CD14-positive monocyte (primary cell): ENCODE measurements at regions of chr3 and their contacts with region 1.

Region 1: DNA sequence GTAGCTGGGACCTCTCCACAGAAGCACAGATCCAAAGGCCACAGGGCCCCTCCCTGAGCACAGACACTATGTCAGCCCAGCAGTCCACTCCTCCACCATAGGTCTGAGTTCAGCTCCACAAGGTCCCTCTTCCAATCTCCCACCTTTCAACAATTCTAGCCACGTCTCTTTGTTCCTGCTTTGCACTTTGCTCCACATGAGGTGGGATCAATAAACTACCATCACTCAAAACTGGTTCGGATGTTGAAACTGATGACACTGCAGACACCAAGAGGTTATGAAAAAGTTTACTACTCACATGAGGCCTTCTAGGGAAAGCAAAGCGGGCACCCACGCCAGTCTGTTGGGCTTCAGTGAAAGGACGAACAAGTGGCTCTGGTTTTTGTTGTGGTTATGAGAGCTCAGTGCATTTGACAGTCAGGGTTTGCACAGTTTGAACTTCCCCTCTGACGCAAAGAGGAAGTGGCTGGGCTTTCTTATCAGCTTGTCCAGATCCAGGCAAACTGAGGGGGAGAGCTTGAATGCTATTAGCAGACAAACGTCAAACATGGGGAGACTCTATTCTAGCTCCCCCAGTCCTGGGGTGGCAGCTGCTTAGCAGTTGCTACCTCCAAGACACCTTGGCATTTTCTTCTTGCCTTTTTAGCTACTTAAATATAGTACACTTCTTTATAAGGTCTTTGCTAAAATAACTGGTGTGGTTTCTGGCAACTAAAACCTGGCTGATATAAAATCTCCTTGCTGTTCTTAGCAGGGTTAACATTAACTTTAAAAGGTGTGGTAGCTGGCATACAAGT is 37.8 kb downstream of the ZNF445 start:
- DNase-seq: peak; percentile 95 to 98 (median 96)
- H3K4me3 ChIP-seq: peak overlapping the region; percentile 37 to 79 (median 44)
- H3K4me3 Mint-ChIP-seq: peak overlapping the region; percentile 75 to 91
- H3K27ac ChIP-seq: peak overlapping the region; percentile 92 to 99
- H3K27ac Mint-ChIP-seq: peak overlapping the region; percentile 98 to 100 (median 98)
- H3K4me1 ChIP-seq: peaks cover 34 to 44% of the 10 kb centered on the region in 2 donors
- H3K4me1 Mint-ChIP-seq: peaks cover 50% of the 10 kb centered on the region
- H3K27me3 ChIP-seq: no peaks in the 10 kb centered on the region
- H3K27me3 Mint-ChIP-seq: no peaks in the 10 kb centered on the region
- CTCF ChIP-seq: no peak

Region 2: GRCh38 chr3:44338010-44338827 is 101.5 kb before region 1 on chr3 and contains the start of gene TCAIM:
- intact Hi-C with region 1: loop called (anchors 5 to 10 kb)
- DNase-seq: peak; percentile 98 to 99 (median 98)
- H3K4me3 ChIP-seq: peak within 1 kb of the TSS; percentile 89 to 92 (median 91)
- H3K4me3 Mint-ChIP-seq: peak within 1 kb of the TSS; percentile 99
- H3K27ac ChIP-seq: peak within 1 kb of the TSS; percentile 88 to 98
- H3K27ac Mint-ChIP-seq: peak within 1 kb of the TSS; percentile 97 to 99 (median 98)
- H3K4me1 ChIP-seq: peaks cover 14 to 17% of the 10 kb centered on the region in 2 donors
- H3K4me1 Mint-ChIP-seq: peaks cover 27% of the 10 kb centered on the region
- H3K27me3 ChIP-seq: no peaks in the 10 kb centered on the region
- H3K27me3 Mint-ChIP-seq: peaks cover 0 to 2% (median 0%) of the 10 kb centered on the region in 3 donors
- CTCF ChIP-seq: no peak
- polyA plus RNA-seq, gene TCAIM: 9.1 to 26.7 (median 20.0) TPM

Region 3: DNA sequence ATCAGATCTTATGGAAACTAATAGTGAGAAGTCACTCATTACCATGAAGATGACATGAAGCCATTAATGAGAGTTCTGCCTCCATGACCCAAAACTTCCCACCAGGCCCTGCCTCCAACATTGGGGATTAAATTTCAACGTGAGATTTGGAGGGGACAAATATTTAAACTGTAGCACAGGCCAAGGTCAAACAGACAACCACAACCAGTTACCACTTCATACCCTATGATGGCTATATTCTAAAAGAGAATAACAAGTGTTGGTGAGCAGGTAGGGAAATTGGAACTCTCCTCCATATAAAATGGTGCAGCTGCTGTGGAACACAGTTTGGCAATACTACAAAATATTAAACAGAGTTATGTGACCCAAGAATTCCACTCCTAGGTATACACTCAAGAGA is 64.2 kb before region 1 on chr3:
- intact Hi-C with region 1: no loop called
- DNase-seq: no peak
- H3K4me3 ChIP-seq: no peak overlapping the region
- H3K4me3 Mint-ChIP-seq: no peak overlapping the region
- H3K27ac ChIP-seq: no peak overlapping the region
- H3K27ac Mint-ChIP-seq: no peak overlapping the region
- H3K4me1 ChIP-seq: no peaks in the 10 kb centered on the region
- H3K4me1 Mint-ChIP-seq: no peaks in the 10 kb centered on the region
- H3K27me3 ChIP-seq: no peaks in the 10 kb centered on the region
- H3K27me3 Mint-ChIP-seq: no peaks in the 10 kb centered on the region
- CTCF ChIP-seq: no peak

Region 4: DNA sequence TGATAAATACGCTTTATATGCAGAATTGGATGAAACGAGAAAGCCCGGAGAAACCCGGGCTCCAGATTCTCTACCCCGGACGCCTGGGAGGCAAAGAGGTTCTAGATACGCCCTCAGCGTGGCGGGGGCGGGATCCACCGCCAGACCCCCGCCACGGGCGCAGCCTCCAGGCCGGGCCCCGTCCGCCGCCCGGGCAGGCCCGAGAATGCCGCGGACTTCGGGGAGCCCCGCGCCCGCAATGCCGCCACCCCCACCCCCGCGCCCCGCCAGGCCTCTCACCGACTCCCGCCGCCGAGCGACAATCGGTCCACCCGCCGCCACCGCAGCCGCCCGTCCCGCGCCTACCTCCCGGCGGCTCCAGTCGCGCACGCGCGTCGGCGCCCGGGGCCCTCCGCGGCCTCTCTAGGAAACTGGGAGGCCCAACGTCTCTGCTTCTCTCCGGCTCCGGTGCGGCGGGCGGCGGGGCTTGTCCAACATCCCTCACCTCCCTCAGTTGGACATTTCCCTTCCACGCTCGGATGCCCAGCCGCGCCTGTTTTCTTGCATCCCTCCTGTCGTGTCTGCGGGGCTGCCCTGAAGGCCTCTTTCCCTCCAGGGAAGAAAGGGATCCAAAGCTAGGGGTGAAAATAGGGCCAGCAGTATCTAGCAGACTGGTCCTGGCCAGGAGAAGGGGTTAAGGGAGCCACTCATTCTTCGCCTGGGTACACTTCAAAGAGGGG is 37.8 kb after region 1 on chr3 and contains the start of gene ZNF445:
- intact Hi-C with region 1: loop called in 1 of 2 experiments (anchors 5 kb)
- DNase-seq: peak; percentile 68 to 75 (median 71)
- H3K4me3 ChIP-seq: peak within 1 kb of the TSS; percentile 64 to 96 (median 83)
- H3K4me3 Mint-ChIP-seq: peak within 1 kb of the TSS; percentile 92 to 97
- H3K27ac ChIP-seq: peak within 1 kb of the TSS in 1 of 2 donors; percentile 68
- H3K27ac Mint-ChIP-seq: peak within 1 kb of the TSS; percentile 47 to 87 (median 77)
- H3K4me1 ChIP-seq: peaks cover 16 to 28% of the 10 kb centered on the region in 2 donors
- H3K4me1 Mint-ChIP-seq: peaks cover 28% of the 10 kb centered on the region
- H3K27me3 ChIP-seq: no peaks in the 10 kb centered on the region
- H3K27me3 Mint-ChIP-seq: peaks cover 1 to 4% (median 2%) of the 10 kb centered on the region in 3 donors
- CTCF ChIP-seq: no peak
- polyA plus RNA-seq, gene ZNF445: 0.41 to 2.5 (median 1.1) TPM

Region 5: GRCh38 chr3:44510000-44510368 is 70.3 kb after region 1 on chr3:
- intact Hi-C with region 1: loop called in 1 of 2 experiments (anchors 2 kb)
- DNase-seq: peak in 1 of 3 donors; percentile 3
- H3K4me3 ChIP-seq: peak overlapping the region; percentile 54 to 100 (median 90)
- H3K4me3 Mint-ChIP-seq: peak overlapping the region; percentile 92
- H3K27ac ChIP-seq: peak overlapping the region in 1 of 2 donors; percentile 82
- H3K27ac Mint-ChIP-seq: peak overlapping the region in 4 of 7 donors; percentile 72 to 93 (median 82)
- H3K4me1 ChIP-seq: peaks cover 16% of the 10 kb centered on the region in 2 donors
- H3K4me1 Mint-ChIP-seq: peaks cover 25% of the 10 kb centered on the region
- H3K27me3 ChIP-seq: no peaks in the 10 kb centered on the region
- H3K27me3 Mint-ChIP-seq: peaks cover 1 to 4% (median 1%) of the 10 kb centered on the region in 3 donors
- CTCF ChIP-seq: no peak

Region 6: DNA sequence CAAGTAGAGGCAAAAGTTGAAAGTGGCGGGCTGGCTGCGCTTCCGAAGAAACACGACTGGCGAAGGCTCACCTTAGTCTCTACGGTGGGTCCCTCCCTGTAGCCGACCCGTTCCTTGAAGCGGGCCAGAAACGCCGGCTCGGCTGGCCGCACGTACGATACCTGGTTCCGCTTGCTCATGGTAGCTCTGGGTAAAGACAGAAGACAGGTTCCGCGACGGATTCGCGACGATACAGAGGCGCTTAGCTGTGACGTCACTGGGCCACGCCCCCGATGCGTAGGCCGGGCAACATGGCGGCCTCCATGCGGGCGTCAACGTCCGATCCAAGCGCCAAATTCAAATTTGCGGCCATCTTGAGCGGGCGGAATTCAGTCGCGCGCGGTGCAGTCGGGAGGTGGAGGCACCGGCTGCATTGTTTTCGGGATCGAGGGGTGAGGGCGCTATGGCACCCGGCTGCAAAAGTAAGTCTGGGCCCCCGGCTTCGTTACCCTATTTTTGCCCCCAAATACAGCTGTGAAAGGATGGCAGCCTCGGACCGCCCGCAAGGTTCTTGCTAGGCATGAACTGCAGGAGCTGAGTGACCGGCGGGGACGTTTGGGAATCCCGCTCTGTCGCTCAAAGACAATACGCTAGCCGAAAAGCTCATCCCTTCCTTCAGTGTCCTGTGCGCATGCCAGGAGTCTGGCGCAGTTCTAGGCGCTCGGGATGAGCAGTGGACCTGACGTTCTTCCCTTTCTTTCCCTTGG is 321.9 kb after region 1 on chr3 and contains the starts of genes KIAA1143 and KIF15:
- intact Hi-C with region 1: loop called in 1 of 2 experiments (anchors 5 kb)
- DNase-seq: peak; percentile 94 to 97 (median 96)
- H3K4me3 ChIP-seq: peak within 1 kb of the TSS; percentile 90 to 97 (median 91)
- H3K4me3 Mint-ChIP-seq: peak within 1 kb of the TSS; percentile 88 to 94
- H3K27ac ChIP-seq: peak within 1 kb of the TSS; percentile 79 to 97
- H3K27ac Mint-ChIP-seq: peak within 1 kb of the TSS; percentile 90 to 97 (median 94)
- H3K4me1 ChIP-seq: peaks cover 14 to 19% of the 10 kb centered on the region in 2 donors
- H3K4me1 Mint-ChIP-seq: peaks cover 15% of the 10 kb centered on the region
- H3K27me3 ChIP-seq: no peaks in the 10 kb centered on the region
- H3K27me3 Mint-ChIP-seq: peaks cover 0 to 1% (median 0%) of the 10 kb centered on the region in 3 donors
- CTCF ChIP-seq: no peak
- polyA plus RNA-seq, gene KIAA1143: 2.4 to 26.4 (median 19.1) TPM
- polyA plus RNA-seq, gene KIF15: 0.15 to 0.16 TPM in 2 of 3 donors, not detected in the other